ENCODE measurements at regions of chr7 and their contacts with region 1.

Region 1: DNA sequence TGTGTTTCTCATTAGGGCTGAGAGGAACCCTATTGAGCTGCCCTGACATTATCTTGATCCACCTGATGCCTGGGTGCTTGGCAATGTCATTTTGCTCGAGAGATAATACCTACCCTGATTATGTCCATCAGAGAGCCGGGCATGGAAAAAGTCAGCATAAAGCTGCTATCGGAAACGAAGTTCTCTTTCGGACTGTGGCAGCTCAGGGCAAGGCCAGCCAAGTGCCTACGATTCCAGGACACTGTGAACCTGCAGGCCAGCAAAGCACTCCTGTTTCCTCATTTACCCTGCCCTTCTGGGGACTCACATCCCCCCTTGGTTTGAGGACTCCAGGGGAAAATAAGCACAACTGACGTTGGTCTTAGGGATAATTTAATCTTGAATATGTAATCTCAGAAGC is 25.2 kb upstream of the NPTX2 start:
- DNase-seq: peak in 1 of 4 donors; percentile 11
- ATAC-seq: no peak
- H3K4me3 ChIP-seq: no peak overlapping the region
- H3K27ac ChIP-seq: no peak overlapping the region
- H3K4me1 ChIP-seq: no peaks in the 10 kb centered on the region
- H3K27me3 ChIP-seq: no peaks in the 10 kb centered on the region
- CTCF ChIP-seq: no peak
- POLR2A ChIP-seq: no peak

Region 2: DNA sequence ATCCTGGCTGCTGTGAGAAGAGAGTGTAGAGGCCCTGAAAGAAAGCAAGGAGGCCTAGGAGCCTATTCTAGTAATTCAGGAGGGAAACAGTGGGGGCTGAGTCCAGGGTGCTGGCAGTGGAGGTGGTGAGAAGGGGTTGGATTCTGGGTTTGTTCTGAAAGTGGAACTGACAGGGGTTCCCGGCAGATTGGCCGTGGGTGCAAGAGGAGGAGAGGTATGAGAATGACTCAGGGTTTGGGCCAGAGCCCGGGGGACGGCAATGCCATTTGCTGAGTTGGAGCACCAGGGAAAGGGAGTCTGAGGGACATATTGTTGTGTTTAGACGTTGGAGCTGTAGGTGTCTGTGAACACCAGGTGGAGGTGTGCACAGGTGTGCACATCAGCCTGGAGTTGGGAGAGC is 63.7 kb after region 1 on chr7:
- intact Hi-C with region 1: no loop called
- DNase-seq: no peak
- ATAC-seq: no peak
- H3K4me3 ChIP-seq: no peak overlapping the region
- H3K27ac ChIP-seq: no peak overlapping the region
- H3K4me1 ChIP-seq: no peaks in the 10 kb centered on the region
- H3K27me3 ChIP-seq: no peaks in the 10 kb centered on the region
- CTCF ChIP-seq: no peak
- POLR2A ChIP-seq: no peak

Region 3: DNA sequence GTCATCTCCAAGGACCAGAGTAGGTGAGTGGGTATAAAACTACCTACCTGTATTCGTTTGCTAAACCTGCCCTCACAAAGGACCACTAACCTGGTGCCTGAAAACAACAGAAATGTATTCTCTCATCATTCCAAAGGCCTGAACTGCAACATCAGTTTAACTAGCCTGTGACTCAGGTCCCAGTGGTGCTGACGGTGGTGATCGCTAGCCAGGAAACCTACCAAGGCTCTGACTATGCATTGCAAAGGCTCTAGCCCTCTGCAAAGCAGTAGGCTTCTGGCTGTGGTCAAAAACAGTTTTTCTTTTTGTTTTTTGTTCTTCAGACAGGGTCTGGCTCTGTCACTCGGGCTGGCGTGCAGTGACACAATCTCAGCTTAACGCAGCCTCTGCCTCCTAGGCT is 132.7 kb after region 1 on chr7:
- intact Hi-C with region 1: no loop called
- DNase-seq: no peak
- ATAC-seq: no peak
- H3K4me3 ChIP-seq: no peak overlapping the region
- H3K27ac ChIP-seq: no peak overlapping the region
- H3K4me1 ChIP-seq: no peaks in the 10 kb centered on the region
- H3K27me3 ChIP-seq: no peaks in the 10 kb centered on the region
- CTCF ChIP-seq: no peak
- POLR2A ChIP-seq: no peak

Region 4: DNA sequence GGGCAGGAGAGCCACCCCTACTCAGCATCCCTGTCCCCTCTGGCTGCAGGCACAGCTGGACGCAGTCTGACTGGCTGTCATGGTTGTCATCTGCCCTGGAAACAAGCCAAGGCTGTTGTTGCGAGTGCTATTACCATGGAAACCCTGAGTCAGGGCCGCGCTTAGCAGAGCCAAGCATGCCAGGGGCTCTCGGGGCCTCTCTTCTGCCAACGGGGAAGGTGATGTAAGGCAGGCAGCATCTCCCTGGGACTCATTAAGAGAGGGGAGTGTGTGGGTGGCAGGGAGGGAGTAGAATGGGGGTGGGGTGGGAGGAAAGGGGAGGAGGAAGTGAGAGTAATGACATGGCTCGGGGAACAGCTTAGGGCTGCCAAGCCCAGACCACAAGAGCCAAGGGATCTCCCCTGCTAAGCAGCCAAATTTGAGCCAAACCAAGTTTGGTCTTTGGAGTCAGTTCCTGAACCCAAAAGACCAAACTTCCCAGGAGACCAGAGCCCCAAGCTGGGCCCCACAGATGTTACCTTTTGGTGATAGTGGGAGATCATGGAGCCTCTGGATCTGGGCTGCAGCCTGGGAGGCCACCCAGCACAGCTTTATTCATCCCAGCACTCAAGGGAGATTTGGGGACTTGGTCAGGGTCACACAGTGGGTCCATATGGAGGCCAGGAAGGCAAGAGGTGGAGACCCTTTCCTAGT is 210.3 kb after region 1 on chr7:
- intact Hi-C with region 1: loop called (anchors 5 kb)
- DNase-seq: peak in 3 of 4 donors; percentile 17 to 48 (median 20)
- ATAC-seq: no peak
- H3K4me3 ChIP-seq: no peak overlapping the region
- H3K27ac ChIP-seq: no peak overlapping the region
- H3K4me1 ChIP-seq: no peaks in the 10 kb centered on the region
- H3K27me3 ChIP-seq: no peaks in the 10 kb centered on the region
- CTCF ChIP-seq: no peak
- POLR2A ChIP-seq: no peak

Region 5: DNA sequence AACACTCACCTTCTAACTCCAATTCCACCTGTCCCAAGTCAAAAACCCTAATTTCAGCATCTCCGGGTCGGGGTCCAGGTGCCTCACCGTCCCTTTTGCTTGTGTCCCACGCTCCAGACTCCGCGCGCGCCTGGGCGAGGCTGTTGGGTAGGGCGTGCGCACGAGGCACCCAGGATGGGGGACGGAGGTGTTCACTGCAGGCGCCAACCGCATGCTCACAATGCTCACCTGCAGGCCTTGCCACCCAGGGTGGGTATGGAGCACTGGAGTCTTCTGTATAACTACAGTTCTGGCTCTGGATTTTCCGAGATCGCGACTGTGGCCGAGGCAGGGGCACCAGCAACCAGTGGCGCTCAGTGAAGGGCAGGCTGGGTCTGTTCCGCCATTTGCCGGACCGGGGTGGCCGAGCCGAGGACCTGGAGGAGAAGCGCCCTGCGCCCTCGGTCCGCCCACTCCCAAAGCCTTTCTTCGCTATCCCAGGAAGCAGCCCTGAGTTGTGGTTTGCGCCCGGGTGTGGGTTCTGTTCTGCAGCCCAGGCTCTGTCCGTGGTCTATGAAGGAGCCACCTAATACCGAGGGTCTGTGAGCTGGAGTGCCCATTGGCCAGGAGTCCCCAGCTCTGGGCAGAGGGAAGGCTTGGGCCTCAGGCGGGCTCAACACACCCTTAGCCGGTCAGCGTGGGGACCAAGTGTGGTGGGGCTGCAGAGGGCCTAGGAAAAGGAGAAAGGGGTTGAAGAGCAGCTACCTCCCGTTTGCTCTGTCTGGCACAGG is 951.3 kb after region 1 on chr7:
- intact Hi-C with region 1: no loop called
- DNase-seq: no peak
- ATAC-seq: no peak
- H3K4me3 ChIP-seq: no peak overlapping the region
- H3K27ac ChIP-seq: no peak overlapping the region
- H3K4me1 ChIP-seq: no peaks in the 10 kb centered on the region
- H3K27me3 ChIP-seq: no peaks in the 10 kb centered on the region
- CTCF ChIP-seq: no peak
- POLR2A ChIP-seq: no peak